ENCODE measurements at regions of chr17 and their contacts with region 1.

Region 1: GRCh38 chr17:71681427-71682173 is 439.2 kb upstream of the SOX9 start:
- DNase-seq: no peak
- ATAC-seq: no peak
- H3K4me3 ChIP-seq: no peak overlapping the region
- H3K27ac ChIP-seq: no peak overlapping the region
- H3K4me1 ChIP-seq: no peaks in the 10 kb centered on the region
- H3K27me3 ChIP-seq: no peaks in the 10 kb centered on the region
- CTCF ChIP-seq: no peak

Region 2: DNA sequence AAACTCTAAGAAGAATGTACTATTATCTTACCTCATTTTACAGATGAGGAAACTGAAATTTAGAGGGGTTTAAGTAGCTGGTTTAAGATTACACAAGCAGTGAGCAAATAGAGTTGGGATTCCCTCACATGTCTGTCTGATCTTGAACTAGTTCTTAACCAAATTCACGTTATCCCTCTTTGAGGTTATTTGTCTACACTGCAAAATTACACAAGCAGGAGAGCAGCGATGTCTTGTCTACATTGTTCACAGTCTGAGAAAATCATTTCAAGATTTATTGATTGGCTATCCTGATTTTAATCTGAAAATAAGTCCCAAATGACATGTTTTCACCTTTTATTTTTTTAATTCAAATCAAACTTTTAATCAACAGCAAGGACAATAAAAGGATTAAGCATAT is 496.1 kb after region 1 on chr17:
- CTCF ChIA-PET with region 1: no interaction called
- POLR2A ChIA-PET with region 1: interaction called, 14 read pairs
- intact Hi-C with region 1: no loop called
- DNase-seq: no peak
- ATAC-seq: no peak
- H3K4me3 ChIP-seq: no peak overlapping the region
- H3K27ac ChIP-seq: no peak overlapping the region
- H3K4me1 ChIP-seq: peaks cover 22% of the 10 kb centered on the region
- H3K27me3 ChIP-seq: no peaks in the 10 kb centered on the region
- CTCF ChIP-seq: no peak